Heart left ventricle (tissue), 16 donors: ENCODE measurements at regions of chr6 and their contacts with region 1.

Region 1: DNA sequence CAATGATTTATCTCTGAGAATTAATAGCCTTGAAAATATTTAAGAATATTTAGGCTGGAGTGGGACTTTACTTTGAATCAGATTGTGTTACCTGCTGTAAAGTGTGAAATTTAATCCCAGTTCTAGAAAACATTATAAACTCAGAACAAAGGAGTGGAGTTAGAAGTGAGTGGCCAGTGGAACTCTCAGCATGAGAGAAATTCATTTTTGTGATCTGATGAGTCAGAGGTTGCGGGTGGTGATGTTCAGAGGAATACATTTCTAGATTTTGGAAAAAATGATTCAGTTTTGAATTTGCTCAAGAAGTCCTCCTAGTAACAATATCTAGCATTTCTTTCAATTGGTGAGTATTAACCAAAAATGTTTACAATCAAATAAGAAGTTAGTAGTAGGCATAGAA is 167.5 kb downstream of the ZFAND3 start:
- DNase-seq: no peak
- ATAC-seq: no peak
- H3K4me3 ChIP-seq: no peak overlapping the region
- H3K27ac ChIP-seq: no peak overlapping the region
- H3K4me1 ChIP-seq: peaks cover 0 to 70% (median 54%) of the 10 kb centered on the region in 12 donors
- H3K27me3 ChIP-seq: no peaks in the 10 kb centered on the region
- CTCF ChIP-seq: no peak
- POLR2A ChIP-seq: no peak

Region 2: GRCh38 chr6:37554480-37554819 is 432.6 kb before region 1 on chr6:
- intact Hi-C with region 1: no loop called
- DNase-seq: no peak
- ATAC-seq: no peak
- H3K4me3 ChIP-seq: no peak overlapping the region
- H3K27ac ChIP-seq: no peak overlapping the region
- H3K4me1 ChIP-seq: peaks cover 0 to 6% (median 0%) of the 10 kb centered on the region in 12 donors
- H3K27me3 ChIP-seq: peaks cover 0 to 10% (median 0%) of the 10 kb centered on the region in 9 donors
- CTCF ChIP-seq: no peak
- POLR2A ChIP-seq: no peak

Region 3: GRCh38 chr6:37940074-37940847 is 46.8 kb before region 1 on chr6:
- intact Hi-C with region 1: loop called in 2 of 10 experiments (anchors 5 kb)
- DNase-seq: peak in 4 of 5 donors; percentile 51 to 63 (median 58)
- ATAC-seq: peak in 3 of 4 donors; percentile 50 to 74 (median 72)
- H3K4me3 ChIP-seq: no peak overlapping the region
- H3K27ac ChIP-seq: no peak overlapping the region
- H3K4me1 ChIP-seq: peaks cover 0 to 63% (median 42%) of the 10 kb centered on the region in 12 donors
- H3K27me3 ChIP-seq: no peaks in the 10 kb centered on the region
- CTCF ChIP-seq: no peak
- POLR2A ChIP-seq: no peak